HepG2 (cell line): ENCODE measurements at regions of chr2 and their contacts with region 1.

Region 1: DNA sequence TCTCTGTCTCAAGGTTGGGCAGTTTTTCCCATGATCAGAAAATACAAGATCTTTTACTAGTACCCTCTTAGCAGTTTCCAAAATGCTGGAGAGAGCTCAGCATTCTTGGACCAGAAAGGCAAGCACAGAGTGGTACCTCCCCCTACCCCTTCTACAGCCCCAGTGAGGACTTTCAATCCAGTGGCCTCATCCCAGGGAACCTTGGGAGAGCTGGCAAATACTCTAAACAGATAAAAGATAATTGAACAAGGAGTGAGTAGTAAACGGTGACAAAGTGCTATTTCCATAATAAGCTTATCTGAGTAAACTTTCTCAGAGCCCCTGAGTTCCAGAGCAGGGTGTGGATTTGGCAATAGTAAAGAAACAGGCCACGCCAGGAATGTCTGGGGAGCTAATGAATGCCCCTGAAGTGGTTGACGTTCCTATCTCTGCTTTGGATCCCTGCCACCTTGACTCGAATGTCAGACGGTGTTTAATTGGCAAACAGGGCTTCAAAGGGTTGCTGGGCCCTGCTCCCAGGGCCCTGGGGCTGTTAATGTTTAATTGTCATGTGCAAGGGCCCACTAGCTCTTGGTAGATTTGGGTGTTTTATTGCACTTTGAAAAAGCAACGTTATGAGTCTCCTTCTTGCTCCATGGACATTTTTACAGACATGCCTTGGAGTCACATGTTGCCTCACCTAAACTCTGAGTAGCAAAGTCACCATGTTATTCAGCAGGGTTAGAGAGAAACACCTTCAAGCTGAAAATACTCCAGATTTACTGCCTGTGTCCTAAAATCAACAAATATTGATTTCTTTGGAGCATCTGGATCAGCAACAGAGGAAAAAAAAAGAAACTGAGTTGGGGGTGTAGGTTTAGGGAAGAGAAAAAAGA is 239.9 kb downstream of the CYRIA start:
- DNase-seq: peak; percentile 95
- ATAC-seq: peak; percentile 97
- H3K4me3 ChIP-seq: no peak overlapping the region
- H3K27ac ChIP-seq: no peak overlapping the region
- H3K4me1 ChIP-seq: peaks cover 27% of the 10 kb centered on the region
- H3K27me3 ChIP-seq: no peaks in the 10 kb centered on the region
- CTCF ChIP-seq: no peak
- EP300 ChIP-seq: peak in 1 of 2 experiments; percentile 91; a peak in 1 of 4 replicates
- POLR2A ChIP-seq: no peak
- RAD21 ChIP-seq: no peak

Region 2: DNA sequence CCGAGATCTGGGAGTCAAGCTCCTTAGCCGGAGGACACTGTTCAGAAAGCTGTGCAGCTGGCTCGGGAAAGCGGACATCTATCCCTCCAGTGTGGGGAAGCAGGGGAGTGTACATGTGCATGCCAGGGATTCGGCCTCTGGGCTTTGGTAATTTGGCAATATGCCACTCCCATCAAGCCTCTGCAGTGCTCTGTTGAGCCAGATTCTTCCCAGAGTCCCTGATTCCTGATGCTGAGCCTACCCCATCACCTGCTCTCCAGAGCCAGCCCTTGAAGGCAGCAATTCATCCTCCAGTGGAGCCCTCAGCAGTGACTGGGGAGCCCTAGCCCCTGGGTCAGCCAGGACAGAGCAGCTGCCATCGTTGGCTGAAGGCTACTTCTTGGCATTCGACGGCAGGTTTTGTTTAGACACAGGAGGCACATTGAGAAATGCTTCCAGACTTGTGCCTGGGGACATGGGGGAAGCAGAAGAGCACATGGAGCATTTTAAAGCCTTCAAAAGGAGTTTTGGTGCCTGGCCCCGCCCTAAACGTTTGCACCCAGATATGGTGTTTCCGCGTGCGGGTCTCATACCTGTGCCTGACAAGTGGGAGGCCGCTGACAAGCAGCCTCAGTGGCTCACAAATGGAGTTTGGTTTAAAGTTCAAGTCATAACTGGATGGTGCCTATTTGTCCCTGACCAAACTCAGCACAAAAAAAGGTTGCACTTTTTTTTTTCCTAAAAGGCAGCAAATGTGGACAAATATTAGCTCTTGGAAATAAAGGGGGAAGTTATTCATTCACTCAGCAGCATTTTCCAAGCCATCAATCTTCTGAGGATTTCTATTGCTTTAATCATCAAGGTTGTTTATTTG is 32.8 kb before region 1 on chr2:
- CTCF ChIA-PET with region 1: no interaction called
- POLR2A ChIA-PET with region 1: interaction called, 3 read pairs
- in situ Hi-C with region 1: no loop called
- intact Hi-C with region 1: loop called (anchors 1 kb)
- DNase-seq: peak; percentile 75
- ATAC-seq: peak; percentile 22
- H3K4me3 ChIP-seq: no peak overlapping the region; a peak in 1 of 6 replicates
- H3K27ac ChIP-seq: no peak overlapping the region
- H3K4me1 ChIP-seq: peaks cover 30% of the 10 kb centered on the region
- H3K27me3 ChIP-seq: no peaks in the 10 kb centered on the region
- CTCF ChIP-seq: no peak
- EP300 ChIP-seq: peak in 1 of 2 experiments; percentile 40; a peak in 1 of 4 replicates
- POLR2A ChIP-seq: no peak
- RAD21 ChIP-seq: no peak

Region 3: DNA sequence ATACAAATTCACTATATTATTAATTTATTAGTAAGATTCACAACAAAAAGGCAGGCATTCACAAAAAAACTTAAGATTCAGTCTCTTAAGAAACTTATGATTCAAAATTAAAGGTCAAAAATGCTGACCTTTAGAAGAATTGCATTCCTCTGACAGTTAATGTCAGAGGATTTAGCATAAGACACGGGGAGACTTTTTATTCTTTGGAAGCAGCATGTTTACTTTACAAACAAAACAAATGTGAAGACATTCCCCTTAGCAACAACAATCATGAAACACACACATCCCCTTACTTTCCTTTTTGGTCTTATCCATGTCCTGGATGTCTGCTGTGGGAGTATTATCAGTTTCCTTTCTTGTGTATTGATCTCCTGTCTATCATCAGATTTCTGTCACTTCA is 975.4 kb after region 1 on chr2:
- CTCF ChIA-PET with region 1: no interaction called
- POLR2A ChIA-PET with region 1: no interaction called
- in situ Hi-C with region 1: no loop called
- intact Hi-C with region 1: no loop called
- DNase-seq: no peak
- ATAC-seq: no peak
- H3K4me3 ChIP-seq: no peak overlapping the region
- H3K27ac ChIP-seq: no peak overlapping the region
- H3K4me1 ChIP-seq: no peaks in the 10 kb centered on the region
- H3K27me3 ChIP-seq: no peaks in the 10 kb centered on the region
- CTCF ChIP-seq: no peak
- EP300 ChIP-seq: no peak
- POLR2A ChIP-seq: no peak
- RAD21 ChIP-seq: no peak